B cell (primary cell): ENCODE measurements at regions of chr4 and their contacts with region 1.

Region 1: DNA sequence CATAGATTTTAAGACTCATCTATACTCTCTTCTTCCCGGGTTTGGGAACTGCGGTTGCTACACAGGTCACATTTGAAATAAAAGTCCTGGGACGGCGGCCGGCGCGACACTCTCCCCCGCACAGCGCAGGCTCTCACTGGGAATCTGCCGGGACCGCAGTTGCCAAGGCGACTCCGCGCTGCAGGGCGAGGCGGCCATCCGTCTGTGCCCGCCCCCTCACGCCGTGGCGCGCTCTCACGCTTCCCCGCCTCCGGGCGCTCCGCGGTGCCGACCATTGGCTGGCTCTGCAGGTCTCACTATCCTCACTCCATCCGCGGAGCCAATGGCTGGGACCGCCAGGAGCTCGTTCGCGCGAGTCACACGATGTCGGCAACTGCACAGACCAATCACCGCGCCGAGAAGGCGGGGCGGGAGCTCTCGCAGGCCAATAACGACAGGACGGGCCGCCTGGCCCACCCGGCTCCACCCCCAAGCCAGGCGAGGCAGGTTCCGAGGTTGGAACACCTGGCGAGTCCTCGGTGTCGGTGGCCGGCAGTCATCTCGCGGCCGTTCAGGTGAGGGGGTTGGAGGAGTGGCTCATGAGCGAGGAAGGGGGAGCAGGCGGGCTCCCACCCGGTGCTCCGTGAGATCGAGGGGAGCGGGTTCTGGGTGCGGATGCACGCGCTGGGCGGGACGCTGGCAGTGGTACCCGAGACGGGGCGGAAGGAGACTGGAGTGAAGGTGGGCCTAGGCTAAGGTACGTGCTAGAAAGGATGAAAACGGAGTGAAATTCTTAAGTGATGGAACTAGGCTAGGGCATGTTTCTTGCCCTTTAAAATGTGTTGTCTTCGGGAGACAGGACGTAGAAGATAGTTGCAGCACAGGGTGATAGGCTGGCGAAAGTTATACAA is at the start of gene MSMO1:
- DNase-seq: peak; percentile 99
- ATAC-seq: peak; percentile 96
- H3K4me3 ChIP-seq: peak within 1 kb of the TSS; percentile 66 to 92 (median 86)
- H3K4me3 Mint-ChIP-seq: no peak within 1 kb of the TSS
- H3K27ac ChIP-seq: peak within 1 kb of the TSS; percentile 59 to 93
- H3K27ac Mint-ChIP-seq: no peak within 1 kb of the TSS
- H3K4me1 ChIP-seq: peaks cover 22 to 26% of the 10 kb centered on the region in 2 donors
- H3K4me1 Mint-ChIP-seq: peaks cover 30% of the 10 kb centered on the region
- H3K27me3 ChIP-seq: no peaks in the 10 kb centered on the region
- H3K27me3 Mint-ChIP-seq: no peaks in the 10 kb centered on the region
- CTCF ChIP-seq: no peak
- total RNA-seq, gene MSMO1: 30.8 and 34.6 TPM in 2 replicates

Region 2: DNA sequence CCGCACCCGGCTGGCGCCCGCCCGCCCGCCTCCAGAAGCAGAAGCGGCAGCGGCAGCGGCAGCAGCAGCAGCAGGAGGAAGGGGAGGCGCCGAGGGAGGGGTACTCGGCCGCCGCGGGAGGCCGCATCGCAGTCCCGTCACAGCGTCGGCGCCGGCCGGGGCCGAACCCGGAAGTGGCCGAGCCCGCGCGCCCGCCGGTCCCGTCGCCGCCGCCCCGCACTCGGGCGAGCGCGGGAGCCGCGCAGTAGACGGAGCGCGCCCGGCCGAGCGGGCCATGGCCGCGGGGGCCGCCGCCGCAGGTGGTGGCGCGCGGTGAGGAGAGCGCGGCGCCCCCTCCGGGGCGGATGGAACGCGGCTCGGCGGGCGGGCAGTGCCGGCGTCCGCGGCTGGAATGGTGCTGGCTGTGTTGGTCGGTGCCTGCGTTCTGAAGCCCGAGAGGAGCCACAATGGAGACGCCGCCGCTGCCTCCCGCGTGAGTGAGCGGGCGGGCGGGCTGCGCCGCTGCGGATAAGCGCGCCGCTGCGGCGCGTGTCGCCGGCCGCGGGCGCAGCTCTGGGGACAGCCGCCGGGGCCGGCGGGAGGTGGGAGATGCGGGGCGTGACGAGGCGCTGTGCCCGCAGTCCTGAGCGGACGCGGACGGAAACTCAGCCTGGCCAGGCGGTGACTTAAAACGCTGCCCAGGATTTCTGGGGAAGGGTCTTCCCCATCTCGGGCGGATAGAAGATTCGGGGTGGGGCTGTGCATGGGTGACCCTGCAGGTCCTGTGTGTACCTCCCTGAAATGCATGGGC is 119.8 kb before region 1 on chr4 and contains the start of gene KLHL2:
- CTCF ChIA-PET with region 1: interaction called, 3 read pairs
- POLR2A ChIA-PET with region 1: interaction called, 3 read pairs
- intact Hi-C with region 1: loop called (anchors 1 kb)
- DNase-seq: peak; percentile 88
- ATAC-seq: peak; percentile 88
- H3K4me3 ChIP-seq: peak within 1 kb of the TSS; percentile 73 to 91 (median 80)
- H3K4me3 Mint-ChIP-seq: peak within 1 kb of the TSS; percentile 95
- H3K27ac ChIP-seq: peak within 1 kb of the TSS; percentile 57 to 73
- H3K27ac Mint-ChIP-seq: peak within 1 kb of the TSS; percentile 93
- H3K4me1 ChIP-seq: peaks cover 36 to 39% of the 10 kb centered on the region in 2 donors
- H3K4me1 Mint-ChIP-seq: peaks cover 65% of the 10 kb centered on the region
- H3K27me3 ChIP-seq: no peaks in the 10 kb centered on the region
- H3K27me3 Mint-ChIP-seq: no peaks in the 10 kb centered on the region
- CTCF ChIP-seq: no peak
- total RNA-seq, gene KLHL2: 76.2 and 77.5 TPM in 2 replicates

Region 3: DNA sequence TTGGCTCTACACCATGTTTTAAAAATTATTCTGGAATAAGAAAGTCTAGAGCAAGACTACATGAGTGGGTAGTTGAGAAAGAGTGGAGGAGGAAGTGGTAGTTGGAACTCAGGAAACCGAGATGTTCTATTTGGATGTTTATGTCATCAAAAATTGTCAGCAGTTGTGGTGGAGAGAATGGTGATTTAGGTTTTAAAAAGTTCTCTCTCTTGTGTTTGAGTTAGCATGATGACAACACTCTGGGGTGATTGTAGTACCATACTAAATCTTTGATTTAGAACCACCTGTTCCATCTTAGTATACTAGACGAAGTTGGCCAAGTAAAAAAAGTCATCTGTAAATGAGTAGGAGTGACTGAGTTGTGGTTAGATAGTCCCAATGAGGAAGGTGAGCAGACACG is 79.4 kb before region 1 on chr4:
- CTCF ChIA-PET with region 1: no interaction called
- POLR2A ChIA-PET with region 1: no interaction called
- intact Hi-C with region 1: loop called (anchors 10 kb)
- DNase-seq: no peak
- ATAC-seq: no peak
- H3K4me3 ChIP-seq: no peak overlapping the region
- H3K4me3 Mint-ChIP-seq: no peak overlapping the region
- H3K27ac ChIP-seq: no peak overlapping the region
- H3K27ac Mint-ChIP-seq: no peak overlapping the region
- H3K4me1 ChIP-seq: peaks cover 0 to 3% of the 10 kb centered on the region in 2 donors
- H3K4me1 Mint-ChIP-seq: peaks cover 3% of the 10 kb centered on the region
- H3K27me3 ChIP-seq: no peaks in the 10 kb centered on the region
- H3K27me3 Mint-ChIP-seq: no peaks in the 10 kb centered on the region
- CTCF ChIP-seq: no peak

Region 4: DNA sequence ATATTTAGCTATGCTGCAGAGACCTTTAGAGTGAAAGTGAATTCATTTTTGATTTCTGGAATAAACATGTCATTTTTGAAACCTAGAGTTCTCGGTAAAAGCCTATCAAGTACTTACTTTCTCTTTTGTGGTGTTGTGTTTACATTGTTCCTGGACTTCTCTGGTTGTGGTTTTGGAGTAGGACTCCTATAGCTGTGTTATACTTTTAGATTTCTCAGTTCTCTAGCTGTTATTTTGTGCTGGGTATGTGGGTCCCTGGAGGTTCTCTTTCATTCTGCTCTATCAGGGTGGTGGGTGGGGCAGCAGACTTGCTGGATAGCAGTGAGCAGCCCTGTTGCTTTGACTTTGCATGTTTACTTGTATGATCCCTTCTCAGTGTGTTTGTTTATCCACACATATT is 25.6 kb before region 1 on chr4:
- CTCF ChIA-PET with region 1: no interaction called
- POLR2A ChIA-PET with region 1: interaction called, 14 read pairs
- intact Hi-C with region 1: no loop called
- DNase-seq: peak; percentile 16
- ATAC-seq: no peak
- H3K4me3 ChIP-seq: peak overlapping the region in 2 of 5 experiments; percentile 13 to 42
- H3K4me3 Mint-ChIP-seq: peak overlapping the region; percentile 66
- H3K27ac ChIP-seq: peak overlapping the region; percentile 28 to 65
- H3K27ac Mint-ChIP-seq: peak overlapping the region; percentile 44
- H3K4me1 ChIP-seq: peaks cover 4 to 6% of the 10 kb centered on the region in 2 donors
- H3K4me1 Mint-ChIP-seq: peaks cover 10% of the 10 kb centered on the region
- H3K27me3 ChIP-seq: no peaks in the 10 kb centered on the region
- H3K27me3 Mint-ChIP-seq: no peaks in the 10 kb centered on the region
- CTCF ChIP-seq: no peak